Caco-2 (cell line): ENCODE measurements at regions of chr5 and their contacts with region 1.

Region 1: GRCh38 chr5:109992264-109992915 is 302.7 kb downstream of the MAN2A1 start:
- DNase-seq: no peak
- H3K4me3 ChIP-seq: no peak overlapping the region
- H3K4me3 Mint-ChIP-seq: no peak overlapping the region
- H3K27ac Mint-ChIP-seq: no peak overlapping the region
- H3K4me1 ChIP-seq: peaks cover 43% of the 10 kb centered on the region
- H3K4me1 Mint-ChIP-seq: peaks cover 61% of the 10 kb centered on the region
- H3K27me3 ChIP-seq: no peaks in the 10 kb centered on the region
- H3K27me3 Mint-ChIP-seq: no peaks in the 10 kb centered on the region
- CTCF ChIP-seq: no peak

Region 2: GRCh38 chr5:109900911-109901627 is 91.3 kb before region 1 on chr5:
- CTCF ChIA-PET with region 1: no interaction called
- POLR2A ChIA-PET with region 1: no interaction called
- intact Hi-C with region 1: loop called (anchors 1 kb)
- DNase-seq: peak; percentile 59 to 80
- H3K4me3 ChIP-seq: no peak overlapping the region
- H3K4me3 Mint-ChIP-seq: peak overlapping the region; percentile 25
- H3K27ac Mint-ChIP-seq: peak overlapping the region; percentile 68
- H3K4me1 ChIP-seq: peaks cover 39% of the 10 kb centered on the region
- H3K4me1 Mint-ChIP-seq: peaks cover 24% of the 10 kb centered on the region
- H3K27me3 ChIP-seq: no peaks in the 10 kb centered on the region
- H3K27me3 Mint-ChIP-seq: no peaks in the 10 kb centered on the region
- CTCF ChIP-seq: no peak

Region 3: GRCh38 chr5:109959652-109960051 is 32.7 kb before region 1 on chr5:
- CTCF ChIA-PET with region 1: no interaction called
- POLR2A ChIA-PET with region 1: no interaction called
- intact Hi-C with region 1: no loop called
- DNase-seq: no peak
- H3K4me3 ChIP-seq: no peak overlapping the region
- H3K4me3 Mint-ChIP-seq: no peak overlapping the region
- H3K27ac Mint-ChIP-seq: no peak overlapping the region
- H3K4me1 ChIP-seq: no peaks in the 10 kb centered on the region
- H3K4me1 Mint-ChIP-seq: no peaks in the 10 kb centered on the region
- H3K27me3 ChIP-seq: no peaks in the 10 kb centered on the region
- H3K27me3 Mint-ChIP-seq: no peaks in the 10 kb centered on the region
- CTCF ChIP-seq: no peak

Region 4: DNA sequence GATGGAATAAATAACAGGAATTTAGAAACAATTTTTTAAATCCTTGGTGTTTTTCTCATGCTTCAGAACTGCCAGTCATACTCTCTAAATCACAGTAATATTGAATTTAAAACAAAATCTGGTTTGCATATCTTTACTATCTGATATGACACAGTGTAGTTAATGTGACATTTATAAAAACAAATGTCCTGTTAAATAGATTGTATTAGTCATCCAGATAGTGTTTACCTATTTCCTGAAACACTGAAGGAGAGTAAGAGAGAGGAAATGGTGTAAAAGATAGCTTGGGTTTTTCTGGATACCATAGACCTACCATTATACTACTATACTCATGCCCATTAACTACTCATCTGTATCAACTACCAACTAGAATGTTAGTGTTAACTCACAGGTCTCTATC is 10.4 kb before region 1 on chr5:
- CTCF ChIA-PET with region 1: no interaction called
- POLR2A ChIA-PET with region 1: no interaction called
- intact Hi-C with region 1: no loop called
- DNase-seq: no peak
- H3K4me3 ChIP-seq: no peak overlapping the region
- H3K4me3 Mint-ChIP-seq: no peak overlapping the region
- H3K27ac Mint-ChIP-seq: no peak overlapping the region
- H3K4me1 ChIP-seq: peaks cover 29% of the 10 kb centered on the region
- H3K4me1 Mint-ChIP-seq: peaks cover 14% of the 10 kb centered on the region
- H3K27me3 ChIP-seq: no peaks in the 10 kb centered on the region
- H3K27me3 Mint-ChIP-seq: no peaks in the 10 kb centered on the region
- CTCF ChIP-seq: no peak

Region 5: GRCh38 chr5:111099058-111099778 is 1106.8 kb after region 1 on chr5:
- CTCF ChIA-PET with region 1: no interaction called
- POLR2A ChIA-PET with region 1: no interaction called
- intact Hi-C with region 1: no loop called
- DNase-seq: no peak
- H3K4me3 ChIP-seq: no peak overlapping the region
- H3K4me3 Mint-ChIP-seq: no peak overlapping the region
- H3K27ac Mint-ChIP-seq: no peak overlapping the region
- H3K4me1 ChIP-seq: no peaks in the 10 kb centered on the region
- H3K4me1 Mint-ChIP-seq: no peaks in the 10 kb centered on the region
- H3K27me3 ChIP-seq: no peaks in the 10 kb centered on the region
- H3K27me3 Mint-ChIP-seq: no peaks in the 10 kb centered on the region
- CTCF ChIP-seq: no peak